ENCODE measurements at regions of chr9 and their contacts with region 1.

Region 1: GRCh38 chr9:128927731-128928411 is 7.1 kb downstream of the PHYHD1 start:
- DNase-seq: no peak
- H3K4me3 ChIP-seq: no peak overlapping the region
- H3K27ac ChIP-seq: no peak overlapping the region
- H3K4me1 ChIP-seq: peaks cover 3% of the 10 kb centered on the region
- H3K27me3 ChIP-seq: no peaks in the 10 kb centered on the region
- CTCF ChIP-seq: peak; percentile 84 to 88

Region 2: DNA sequence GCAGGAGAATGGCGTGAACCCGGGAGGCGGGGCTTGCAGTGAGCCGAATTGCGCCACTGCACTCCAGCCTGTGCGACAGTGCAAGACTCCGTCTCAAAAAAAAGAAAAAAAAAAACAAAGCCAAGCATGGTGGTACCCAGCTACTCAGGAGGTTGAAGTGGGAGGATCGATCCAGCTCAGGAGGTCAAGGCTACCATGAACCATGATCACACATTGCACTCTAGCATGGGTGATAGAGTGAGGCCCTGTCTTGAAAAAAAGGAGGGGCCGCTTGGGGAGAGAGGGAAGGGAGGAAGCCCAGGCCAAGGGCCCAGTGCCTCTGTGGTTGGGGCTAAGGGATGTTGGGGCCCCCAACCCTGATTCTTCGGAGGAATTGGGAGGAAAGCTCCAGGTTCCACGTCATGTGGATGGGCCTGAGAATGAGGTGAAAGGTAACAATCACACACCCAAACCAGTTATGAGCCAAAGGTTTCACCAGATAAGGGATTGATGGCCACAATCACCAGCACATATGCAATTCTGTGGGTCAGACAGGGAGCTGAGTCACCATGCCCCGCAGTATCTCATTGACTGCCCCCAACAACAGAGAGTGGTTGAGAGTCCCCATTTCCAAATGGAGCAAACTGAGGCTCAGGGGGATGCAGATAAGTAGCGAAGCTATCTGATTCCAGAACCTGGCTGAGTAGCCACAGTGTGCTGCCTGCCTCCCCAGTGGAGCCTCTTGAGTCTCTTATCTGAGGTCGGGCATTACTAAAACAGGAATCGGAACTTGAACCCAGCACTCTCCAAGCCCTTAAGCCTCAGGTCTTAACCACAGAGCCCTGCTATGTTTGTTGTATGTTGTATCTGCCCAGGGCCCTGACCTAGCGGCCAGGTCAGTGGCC is 631.3 kb before region 1 on chr9:
- CTCF ChIA-PET with region 1: no interaction called
- dilution Hi-C with region 1: no loop called
- in situ Hi-C with region 1: no loop called
- intact Hi-C with region 1: no loop called
- DNase-seq: no peak
- H3K4me3 ChIP-seq: no peak overlapping the region
- H3K27ac ChIP-seq: no peak overlapping the region
- H3K4me1 ChIP-seq: no peaks in the 10 kb centered on the region
- H3K27me3 ChIP-seq: no peaks in the 10 kb centered on the region
- CTCF ChIP-seq: no peak

Region 3: GRCh38 chr9:128881901-128882681 is 45.8 kb before region 1 on chr9 and contains the starts of genes KYAT1 and LRRC8A:
- CTCF ChIA-PET with region 1: no interaction called
- dilution Hi-C with region 1: no loop called
- in situ Hi-C with region 1: no loop called
- intact Hi-C with region 1: loop called (anchors 2 kb)
- DNase-seq: peak; percentile 96
- H3K4me3 ChIP-seq: peak within 1 kb of the TSS; percentile 85 to 88 (median 87)
- H3K27ac ChIP-seq: peak within 1 kb of the TSS; percentile 76
- H3K4me1 ChIP-seq: peaks cover 49% of the 10 kb centered on the region
- H3K27me3 ChIP-seq: no peaks in the 10 kb centered on the region
- CTCF ChIP-seq: no peak
- total RNA-seq, gene KYAT1: 10.2 to 11.5 TPM
- total RNA-seq, gene LRRC8A: 155 to 206 TPM

Region 4: GRCh38 chr9:128902351-128903078 is 25.4 kb before region 1 on chr9:
- CTCF ChIA-PET with region 1: no interaction called
- dilution Hi-C with region 1: no loop called
- in situ Hi-C with region 1: no loop called
- intact Hi-C with region 1: loop called (anchors 2 kb)
- DNase-seq: peak; percentile 96
- H3K4me3 ChIP-seq: no peak overlapping the region
- H3K27ac ChIP-seq: peak overlapping the region; percentile 82
- H3K4me1 ChIP-seq: peaks cover 65% of the 10 kb centered on the region
- H3K27me3 ChIP-seq: no peaks in the 10 kb centered on the region
- CTCF ChIP-seq: no peak

Measured in mammary epithelial cell (primary cell).